ENCODE measurements at regions of chr1 and their contacts with region 1.

Region 1: GRCh38 chr1:147172168-147172992 is at the start of gene PRKAB2:
- DNase-seq: peak; percentile 84
- H3K4me3 ChIP-seq: peak within 1 kb of the TSS; percentile 81 to 92 (median 90)
- H3K27ac ChIP-seq: peak within 1 kb of the TSS; percentile 91 to 96 (median 94)
- H3K4me1 ChIP-seq: peaks cover 0 to 60% (median 29%) of the 10 kb centered on the region in 3 donors
- H3K27me3 ChIP-seq: no peaks in the 10 kb centered on the region
- CTCF ChIP-seq: peak; percentile 80 to 96 (median 92)
- POLR2A ChIP-seq: peak in 3 of 4 donors; percentile 30 to 75 (median 48)
- total RNA-seq, gene PRKAB2: 2.4 to 14.7 (median 8.1) TPM

Region 2: DNA sequence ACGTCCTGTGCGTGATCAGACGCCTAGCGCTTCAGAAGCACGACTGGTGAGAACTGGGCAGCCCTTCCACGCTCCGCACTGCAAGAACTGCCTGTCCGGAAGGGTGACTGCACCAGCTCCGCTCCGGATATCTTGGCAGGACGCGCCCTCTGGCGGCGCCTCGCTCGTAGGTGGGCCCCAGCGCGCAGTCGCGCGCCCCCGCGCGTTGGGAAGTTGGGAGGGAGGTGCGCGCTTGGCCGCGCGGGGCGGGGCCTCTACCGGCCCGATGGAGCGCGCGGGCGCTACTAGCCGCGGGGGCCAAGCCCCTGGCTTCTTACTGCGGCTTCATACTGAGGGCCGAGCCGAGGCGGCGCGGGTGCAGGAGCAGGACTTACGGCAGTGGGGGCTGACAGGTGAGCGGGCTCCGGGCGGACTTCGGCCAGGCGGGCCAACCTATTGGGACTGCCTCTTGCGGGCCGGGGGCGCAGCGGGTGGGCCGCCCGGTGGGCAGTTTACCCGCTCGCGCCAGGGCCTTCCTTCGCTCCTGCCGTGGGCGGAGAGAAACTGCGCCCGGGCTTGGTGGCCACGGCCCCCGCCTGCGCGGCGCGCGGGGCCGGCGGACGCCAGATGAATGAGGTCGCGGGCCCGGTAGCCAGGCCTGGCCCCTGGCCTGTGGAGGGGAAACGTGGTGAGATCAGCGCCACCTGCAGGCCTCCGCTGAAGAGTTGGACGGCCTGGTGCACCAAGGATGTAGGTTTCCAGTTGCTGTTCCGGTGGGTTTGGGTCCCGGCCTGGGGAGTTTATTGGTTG is 70.3 kb after region 1 on chr1 and contains the start of gene CHD1L:
- intact Hi-C with region 1: loop called (anchors 5 kb)
- DNase-seq: peak; percentile 80
- H3K4me3 ChIP-seq: peak within 1 kb of the TSS; percentile 79 to 98 (median 92)
- H3K27ac ChIP-seq: peak within 1 kb of the TSS; percentile 89 to 96 (median 92)
- H3K4me1 ChIP-seq: peaks cover 0 to 38% (median 13%) of the 10 kb centered on the region in 3 donors
- H3K27me3 ChIP-seq: no peaks in the 10 kb centered on the region
- CTCF ChIP-seq: peak; percentile 76 to 98 (median 93)
- POLR2A ChIP-seq: peak in 1 of 4 donors; percentile 61
- total RNA-seq, gene CHD1L: 6.7 to 24.2 (median 18.4) TPM

Region 3: DNA sequence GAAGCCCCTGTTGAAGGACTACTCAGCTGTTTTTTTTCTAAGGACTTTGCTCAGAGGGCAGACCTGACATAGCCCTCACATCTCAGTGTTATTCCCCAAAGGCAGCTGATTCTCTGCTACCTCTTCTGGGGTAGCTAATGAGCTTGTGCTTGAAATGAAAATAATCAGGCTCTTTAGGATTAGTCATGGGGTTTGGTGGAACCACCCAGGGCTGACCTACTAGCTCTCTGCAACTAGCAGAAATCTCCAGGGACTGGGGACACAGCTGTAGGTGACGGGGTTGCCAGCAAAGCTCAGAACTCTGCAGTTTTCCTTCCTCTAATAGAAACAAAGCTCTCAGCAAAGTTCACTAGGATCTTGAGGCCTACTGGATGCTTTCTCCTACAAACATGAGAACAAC is 262.5 kb after region 1 on chr1:
- intact Hi-C with region 1: no loop called
- DNase-seq: no peak
- H3K4me3 ChIP-seq: no peak overlapping the region
- H3K27ac ChIP-seq: no peak overlapping the region
- H3K4me1 ChIP-seq: no peaks in the 10 kb centered on the region
- H3K27me3 ChIP-seq: peaks cover 0 to 6% (median 0%) of the 10 kb centered on the region in 4 donors
- CTCF ChIP-seq: no peak
- POLR2A ChIP-seq: no peak

Region 4: DNA sequence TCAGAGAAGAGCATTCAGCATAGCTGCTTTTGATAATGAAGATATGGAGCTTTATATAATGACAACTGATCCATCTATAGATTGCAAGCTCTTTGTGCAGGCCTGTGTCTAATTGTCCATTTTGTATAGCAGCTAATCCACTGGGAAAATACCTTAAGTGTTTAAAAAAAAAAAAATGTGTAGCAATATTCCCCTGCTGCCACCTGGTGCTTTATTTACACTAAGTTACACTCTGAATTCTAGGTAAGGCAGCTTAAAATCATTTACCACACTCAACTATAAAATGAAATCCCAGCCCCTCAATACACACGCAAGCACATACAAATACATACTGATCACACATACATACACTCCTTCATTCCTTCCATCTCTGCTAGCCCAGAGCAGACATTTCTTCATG is 319.8 kb after region 1 on chr1:
- intact Hi-C with region 1: no loop called
- DNase-seq: no peak
- H3K4me3 ChIP-seq: no peak overlapping the region
- H3K27ac ChIP-seq: no peak overlapping the region
- H3K4me1 ChIP-seq: peaks cover 0 to 5% (median 0%) of the 10 kb centered on the region in 3 donors
- H3K27me3 ChIP-seq: no peaks in the 10 kb centered on the region
- CTCF ChIP-seq: no peak
- POLR2A ChIP-seq: no peak

Measured in esophagus squamous epithelium (tissue), 5 donors.